ENCODE measurements at regions of chr11 and their contacts with region 1.

Region 1: DNA sequence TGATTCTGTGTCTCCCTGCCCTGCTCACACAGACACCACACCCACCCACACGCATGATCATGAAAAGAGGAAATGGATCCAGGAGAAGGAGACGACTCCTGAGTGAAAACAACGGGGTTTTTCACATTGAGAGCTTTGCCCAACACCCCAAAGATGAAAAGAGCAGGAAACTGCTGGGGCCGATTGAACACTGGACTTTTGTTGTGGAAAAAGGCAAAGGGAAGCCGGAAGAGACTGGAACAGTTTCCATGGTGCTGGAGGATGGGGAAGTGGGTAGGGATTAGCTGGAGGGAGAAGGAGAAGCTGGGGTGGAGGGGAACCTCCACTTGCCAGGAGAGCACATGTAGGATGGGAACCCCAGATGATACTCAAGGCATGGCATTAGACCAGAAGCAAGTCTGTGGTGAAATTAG is 5.2 kb upstream of the SLC43A3 start:
- DNase-seq: no peak
- H3K4me3 ChIP-seq: no peak overlapping the region
- H3K27ac ChIP-seq: no peak overlapping the region
- H3K4me1 ChIP-seq: peaks cover 0 to 3% (median 2%) of the 10 kb centered on the region in 4 experiments; a peak in 4 of 7 replicates
- H3K27me3 ChIP-seq: peaks cover 0 to 7% (median 3%) of the 10 kb centered on the region in 4 experiments; a peak in 2 of 7 replicates
- CTCF ChIP-seq: no peak
- EP300 ChIP-seq: no peak
- POLR2A ChIP-seq: no peak
- RAD21 ChIP-seq: no peak

Region 2: GRCh38 chr11:57288771-57289579 is 143.2 kb before region 1 on chr11:
- CTCF ChIA-PET with region 1: no interaction called
- POLR2A ChIA-PET with region 1: no interaction called
- DNase-seq: no peak
- H3K4me3 ChIP-seq: no peak overlapping the region; a peak in 1 of 8 replicates
- H3K27ac ChIP-seq: no peak overlapping the region
- H3K4me1 ChIP-seq: peaks cover 0 to 8% (median 2%) of the 10 kb centered on the region in 4 experiments; a peak in 5 of 7 replicates
- H3K27me3 ChIP-seq: no peaks in the 10 kb centered on the region
- CTCF ChIP-seq: no peak
- EP300 ChIP-seq: no peak
- POLR2A ChIP-seq: no peak
- RAD21 ChIP-seq: no peak

Region 3: GRCh38 chr11:57386178-57386940 is 45.8 kb before region 1 on chr11:
- CTCF ChIA-PET with region 1: no interaction called
- POLR2A ChIA-PET with region 1: no interaction called
- DNase-seq: no peak
- H3K4me3 ChIP-seq: no peak overlapping the region
- H3K27ac ChIP-seq: no peak overlapping the region
- H3K4me1 ChIP-seq: no peaks in the 10 kb centered on the region
- H3K27me3 ChIP-seq: no peaks in the 10 kb centered on the region
- CTCF ChIP-seq: no peak
- EP300 ChIP-seq: no peak
- POLR2A ChIP-seq: no peak
- RAD21 ChIP-seq: no peak

Region 4: GRCh38 chr11:57406337-57406904 is 25.7 kb before region 1 on chr11:
- CTCF ChIA-PET with region 1: no interaction called
- POLR2A ChIA-PET with region 1: no interaction called
- DNase-seq: no peak
- H3K4me3 ChIP-seq: no peak overlapping the region
- H3K27ac ChIP-seq: no peak overlapping the region
- H3K4me1 ChIP-seq: no peaks in the 10 kb centered on the region
- H3K27me3 ChIP-seq: no peaks in the 10 kb centered on the region
- CTCF ChIP-seq: no peak
- EP300 ChIP-seq: no peak
- POLR2A ChIP-seq: no peak
- RAD21 ChIP-seq: no peak

Region 5: DNA sequence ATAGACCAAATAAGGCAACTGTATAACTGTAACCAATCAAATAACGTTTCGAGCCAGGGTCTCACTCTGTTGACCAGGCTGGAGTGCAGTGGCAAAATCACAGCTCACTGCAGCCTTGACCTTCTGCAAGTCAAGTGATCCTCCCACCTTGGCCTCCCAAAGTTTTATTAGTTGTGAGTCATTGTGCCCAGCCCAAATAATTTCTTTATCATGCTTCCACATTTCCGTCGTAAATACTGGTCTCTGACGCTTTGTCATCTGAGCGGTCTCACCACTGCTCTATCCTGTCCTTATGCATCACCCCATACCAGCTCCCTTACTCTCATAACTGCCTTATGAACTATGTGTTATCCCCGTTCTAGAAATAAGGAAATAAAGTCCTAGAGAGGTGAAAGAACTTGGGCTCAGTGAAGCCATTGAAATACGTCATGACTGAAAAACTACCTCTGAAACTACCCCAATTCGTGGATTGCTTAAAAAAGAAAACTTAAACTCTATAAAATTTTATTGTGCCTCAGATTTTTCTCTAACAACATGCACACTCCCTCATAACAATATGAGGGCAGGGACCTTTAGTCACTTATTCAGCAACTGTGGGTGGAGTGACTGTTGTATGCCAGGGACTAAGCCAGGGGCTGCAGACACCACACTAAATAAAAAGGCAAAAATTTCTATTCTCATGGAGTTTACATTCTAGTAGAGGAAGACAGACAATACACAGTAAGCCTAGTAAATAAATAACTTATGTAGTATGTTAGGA is 12.4 kb after region 1 on chr11:
- CTCF ChIA-PET with region 1: interaction called, 21 read pairs
- POLR2A ChIA-PET with region 1: no interaction called
- DNase-seq: no peak
- H3K4me3 ChIP-seq: no peak overlapping the region
- H3K27ac ChIP-seq: no peak overlapping the region
- H3K4me1 ChIP-seq: no peaks in the 10 kb centered on the region
- H3K27me3 ChIP-seq: no peaks in the 10 kb centered on the region; a peak in 1 of 7 replicates
- CTCF ChIP-seq: no peak
- EP300 ChIP-seq: no peak
- POLR2A ChIP-seq: no peak
- RAD21 ChIP-seq: no peak

Measured in H1 (cell line).